GM18951 (cell line): ENCODE measurements at regions of chr1 and their contacts with region 1.

Region 1: GRCh38 chr1:16613185-16614147 is at the start of gene NBPF1:
- POLR2A ChIP-seq: peak; percentile 45

Region 2: GRCh38 chr1:16396591-16396990 is 216.9 kb before region 1 on chr1:
- in situ Hi-C with region 1: no loop called
- POLR2A ChIP-seq: no peak

Region 3: DNA sequence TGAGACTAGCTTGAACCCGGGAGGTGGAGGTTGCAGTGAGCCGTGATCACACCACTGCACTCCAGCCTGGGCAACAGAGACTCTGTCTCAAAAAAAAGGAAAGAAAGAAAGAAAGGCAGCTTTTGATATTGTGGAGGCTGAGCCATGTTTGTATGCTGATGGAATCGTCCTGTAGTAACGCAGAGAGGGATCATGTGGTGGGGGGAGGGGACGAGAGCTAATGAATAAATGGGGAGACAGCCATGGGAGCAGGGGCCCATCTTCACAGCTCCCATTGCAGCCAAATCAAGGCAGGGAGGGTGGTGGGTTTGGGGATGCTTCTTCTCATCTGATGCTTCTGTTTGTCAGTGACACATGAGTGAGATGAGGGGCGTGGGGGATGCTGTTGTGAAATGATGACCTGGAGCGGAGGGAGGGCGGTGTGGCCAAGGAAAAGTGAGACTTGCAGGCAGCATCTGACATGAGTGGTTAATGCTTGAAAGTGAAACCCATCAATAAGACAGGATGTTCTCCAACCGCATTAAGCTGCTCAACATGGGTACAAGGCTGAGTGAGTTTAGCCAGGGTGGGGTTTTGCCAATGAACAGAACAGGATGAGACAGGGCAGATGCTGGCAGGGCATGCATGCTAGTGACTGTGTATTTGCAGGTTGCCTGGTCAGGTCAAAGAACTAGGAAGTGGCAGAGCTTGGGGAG is 192.9 kb before region 1 on chr1:
- in situ Hi-C with region 1: no loop called
- POLR2A ChIP-seq: no peak

Region 4: GRCh38 chr1:16717336-16718098 is 104.1 kb after region 1 on chr1:
- in situ Hi-C with region 1: loop called (anchors 25 kb)
- POLR2A ChIP-seq: no peak